Naive thymus-derived CD4-positive, alpha-beta T cell (primary cell): ENCODE measurements at regions of chr14 and their contacts with region 1.

Region 1: DNA sequence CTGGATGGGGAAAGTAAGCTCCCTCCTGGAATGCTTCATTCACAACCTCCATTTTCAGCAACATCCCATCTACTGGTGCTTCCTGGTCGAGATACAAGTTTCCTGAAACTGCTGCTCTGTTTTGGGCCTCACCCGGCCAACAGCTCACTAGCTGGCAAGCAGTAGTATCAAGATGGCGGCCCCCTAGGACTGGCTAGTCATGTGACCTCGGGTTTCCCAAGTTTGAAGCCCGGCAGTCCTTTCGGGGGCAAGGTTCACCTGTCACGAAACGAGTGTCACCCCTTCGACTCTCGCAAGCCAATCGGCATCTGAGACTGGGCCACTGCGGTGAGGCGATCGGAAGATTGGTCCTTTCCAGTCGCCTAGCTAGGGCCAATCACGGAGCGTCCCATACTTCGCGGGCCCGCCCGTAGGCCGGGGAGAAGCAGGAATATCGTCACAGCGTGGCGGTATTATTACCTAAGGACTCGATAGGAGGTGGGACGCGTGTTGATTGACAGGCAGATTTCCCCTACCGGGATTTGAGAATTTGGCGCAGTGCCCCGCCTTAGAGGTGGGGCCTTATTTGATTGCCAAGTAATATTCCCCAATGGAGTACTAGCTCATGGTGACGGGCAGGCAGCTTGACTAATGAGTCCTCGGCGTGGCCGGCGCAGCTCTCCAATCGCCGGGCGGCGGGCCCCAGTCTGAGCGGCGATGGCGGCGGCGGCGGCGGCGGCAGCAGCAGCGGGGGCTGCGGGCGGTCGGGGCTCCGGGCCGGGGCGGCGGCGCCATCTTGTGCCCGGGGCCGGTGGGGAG is at the start of gene PABPN1:
- DNase-seq: peak; percentile 87 to 100 (median 99)
- ATAC-seq: peak; percentile 91
- H3K4me3 ChIP-seq: peak within 1 kb of the TSS; percentile 84
- H3K4me3 Mint-ChIP-seq: peak within 1 kb of the TSS; percentile 91 to 97 (median 93)
- H3K27ac ChIP-seq: peak within 1 kb of the TSS; percentile 96
- H3K27ac Mint-ChIP-seq: peak within 1 kb of the TSS; percentile 96 to 99 (median 98)
- H3K4me1 ChIP-seq: peaks cover 22% of the 10 kb centered on the region in 2 donors
- H3K4me1 Mint-ChIP-seq: peaks cover 22 to 38% (median 32%) of the 10 kb centered on the region in 7 donors
- H3K27me3 ChIP-seq: no peaks in the 10 kb centered on the region
- H3K27me3 Mint-ChIP-seq: peaks cover 0 to 3% (median 0%) of the 10 kb centered on the region in 5 donors
- total RNA-seq, gene PABPN1: 176 to 213 (median 196) TPM

Region 2: GRCh38 chr14:22918804-22919600 is 402.0 kb before region 1 on chr14 and contains the start of gene RBM23:
- CTCF ChIA-PET with region 1: no interaction called
- POLR2A ChIA-PET with region 1: interaction called, 4 read pairs
- intact Hi-C with region 1: loop called (anchors 1 kb)
- DNase-seq: peak; percentile 98 to 100 (median 100)
- ATAC-seq: peak; percentile 92
- H3K4me3 ChIP-seq: peak within 1 kb of the TSS; percentile 96
- H3K4me3 Mint-ChIP-seq: peak within 1 kb of the TSS; percentile 93 to 100 (median 97)
- H3K27ac ChIP-seq: peak within 1 kb of the TSS; percentile 98
- H3K27ac Mint-ChIP-seq: peak within 1 kb of the TSS; percentile 100
- H3K4me1 ChIP-seq: peaks cover 0 to 19% of the 10 kb centered on the region in 2 donors
- H3K4me1 Mint-ChIP-seq: peaks cover 18 to 56% (median 49%) of the 10 kb centered on the region in 7 donors
- H3K27me3 ChIP-seq: no peaks in the 10 kb centered on the region
- H3K27me3 Mint-ChIP-seq: peaks cover 0 to 4% (median 0%) of the 10 kb centered on the region in 5 donors
- total RNA-seq, gene RBM23: 91.9 to 140 (median 99.1) TPM

Region 3: DNA sequence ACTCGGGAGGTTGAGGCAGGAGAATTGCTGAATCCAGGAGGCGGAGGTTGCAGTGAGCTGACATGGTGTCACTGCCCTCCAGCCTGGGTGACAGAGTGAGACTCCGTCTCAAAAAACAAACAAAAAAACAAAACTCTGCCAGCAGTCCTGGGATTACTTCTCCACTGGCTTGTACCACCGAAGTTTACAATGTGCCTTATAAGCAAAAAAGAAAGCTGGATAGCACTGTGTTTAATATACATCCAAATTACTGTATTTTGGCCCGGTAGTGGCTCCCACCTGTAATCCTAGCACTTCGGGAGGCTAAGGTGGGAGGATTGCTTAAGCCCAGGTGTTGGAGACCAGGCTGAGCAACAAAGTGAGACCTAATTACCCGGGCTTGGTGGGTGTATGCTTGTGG is 51.8 kb before region 1 on chr14:
- CTCF ChIA-PET with region 1: no interaction called
- POLR2A ChIA-PET with region 1: interaction called, 6 read pairs
- intact Hi-C with region 1: loop called (anchors 1 to 2 kb)
- DNase-seq: no peak
- ATAC-seq: no peak
- H3K4me3 ChIP-seq: no peak overlapping the region
- H3K4me3 Mint-ChIP-seq: no peak overlapping the region
- H3K27ac ChIP-seq: no peak overlapping the region
- H3K27ac Mint-ChIP-seq: no peak overlapping the region
- H3K4me1 ChIP-seq: no peaks in the 10 kb centered on the region
- H3K4me1 Mint-ChIP-seq: no peaks in the 10 kb centered on the region
- H3K27me3 ChIP-seq: peaks cover 0 to 4% of the 10 kb centered on the region in 2 donors
- H3K27me3 Mint-ChIP-seq: peaks cover 0 to 18% (median 12%) of the 10 kb centered on the region in 5 donors

Region 4: DNA sequence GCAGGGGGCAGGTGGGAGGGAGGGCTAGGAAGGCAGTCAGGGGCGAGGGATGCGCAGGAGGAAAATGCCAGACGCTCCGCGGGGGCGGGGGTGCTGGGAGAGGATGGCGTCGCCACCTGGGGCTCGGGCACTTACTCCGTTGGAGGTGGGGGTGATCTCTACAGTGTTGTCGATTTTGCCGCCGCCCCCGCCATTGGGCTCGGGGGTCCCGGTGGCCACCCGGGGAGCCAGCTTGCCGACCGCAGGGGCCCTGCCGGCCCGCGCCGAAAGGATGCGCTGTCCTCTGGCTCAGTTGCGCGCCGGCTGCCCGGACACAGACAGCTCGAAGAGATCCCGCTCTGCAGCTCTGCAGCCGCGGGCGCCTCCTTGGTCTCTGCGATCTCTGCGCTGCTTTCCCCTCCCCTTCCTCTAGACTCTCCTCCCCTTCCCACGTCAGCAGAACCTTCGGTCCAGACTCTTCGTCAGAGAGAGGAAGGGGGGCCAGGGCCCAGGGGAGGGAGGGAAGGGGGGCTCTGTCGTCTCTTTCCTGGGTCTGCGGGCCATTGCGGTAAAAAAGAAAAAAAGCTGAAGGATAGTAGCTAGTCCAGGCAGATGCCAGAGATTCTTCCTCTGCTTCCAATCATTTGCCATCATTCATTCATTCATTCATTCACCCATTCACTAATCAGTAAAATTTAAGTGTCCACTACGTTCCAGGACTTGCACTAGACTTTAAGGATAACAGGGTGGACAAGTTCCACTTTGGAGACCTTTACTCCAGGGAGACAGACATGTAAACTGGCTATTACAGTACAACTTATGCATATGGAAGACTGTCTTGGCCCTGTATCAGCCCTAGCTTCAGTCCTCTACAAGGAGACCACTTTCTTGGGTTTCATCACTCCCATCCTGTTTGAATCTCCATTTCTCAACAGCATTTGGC is 31.8 kb after region 1 on chr14 and contains the start of gene SLC22A17:
- CTCF ChIA-PET with region 1: interaction called, 3 read pairs
- POLR2A ChIA-PET with region 1: interaction called, 26 read pairs
- intact Hi-C with region 1: loop called in 1 of 2 experiments (anchors 1 kb)
- DNase-seq: peak; percentile 42 to 80 (median 67)
- ATAC-seq: peak; percentile 93
- H3K4me3 ChIP-seq: peak within 1 kb of the TSS; percentile 54
- H3K4me3 Mint-ChIP-seq: peak within 1 kb of the TSS; percentile 78 to 92 (median 88)
- H3K27ac ChIP-seq: peak within 1 kb of the TSS; percentile 58
- H3K27ac Mint-ChIP-seq: peak within 1 kb of the TSS in 8 of 9 donors; percentile 5 to 93 (median 77)
- H3K4me1 ChIP-seq: no peaks in the 10 kb centered on the region
- H3K4me1 Mint-ChIP-seq: peaks cover 10 to 25% (median 18%) of the 10 kb centered on the region in 7 donors
- H3K27me3 ChIP-seq: no peaks in the 10 kb centered on the region
- H3K27me3 Mint-ChIP-seq: peaks cover 0 to 55% (median 33%) of the 10 kb centered on the region in 5 donors
- total RNA-seq, gene SLC22A17: 1.9 to 30.0 (median 22.6) TPM

Region 5: DNA sequence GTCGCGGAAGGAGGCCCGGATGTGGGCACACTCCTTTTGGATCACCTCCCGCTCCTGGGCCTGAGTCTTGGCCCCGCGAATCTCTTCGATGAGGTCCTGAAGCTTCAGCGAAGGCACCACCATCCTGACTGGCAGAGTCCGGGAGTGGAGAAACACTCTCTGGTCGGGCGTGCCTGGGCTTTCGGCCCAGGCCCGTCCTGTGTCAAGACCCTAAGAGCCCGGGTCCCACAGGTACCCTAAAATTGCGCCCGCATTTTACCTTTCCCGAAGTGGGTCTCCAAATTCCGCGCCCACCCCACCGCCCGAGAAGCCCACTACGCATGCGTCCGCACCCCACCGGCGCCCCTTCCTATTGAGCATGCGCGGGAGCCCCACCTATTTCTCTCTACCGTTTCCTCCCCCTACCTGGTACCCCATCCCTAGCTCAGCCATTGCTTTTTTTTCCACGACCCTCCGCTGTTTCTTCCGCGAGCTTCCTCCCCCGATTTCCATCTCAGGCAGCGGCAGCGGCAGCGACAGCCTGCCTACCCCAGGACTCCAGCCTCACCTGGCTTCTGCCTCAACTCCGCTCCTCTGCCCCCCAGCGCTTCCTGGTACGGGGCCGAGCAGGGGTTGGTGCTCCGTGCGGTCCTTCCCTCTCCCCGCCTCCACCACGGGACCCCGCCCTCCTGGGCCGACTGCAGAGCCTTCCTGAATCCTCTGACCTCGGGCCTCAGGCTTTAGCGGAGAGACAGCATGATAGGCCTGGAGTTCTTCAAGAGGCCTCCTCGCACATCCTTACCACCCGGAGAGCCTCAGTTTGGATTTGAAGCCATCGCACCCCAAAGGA is 246.4 kb after region 1 on chr14 and contains the start of gene AP1G2:
- CTCF ChIA-PET with region 1: no interaction called
- POLR2A ChIA-PET with region 1: no interaction called
- intact Hi-C with region 1: loop called in 1 of 2 experiments (anchors 1 kb)
- DNase-seq: peak; percentile 67 to 87 (median 83)
- ATAC-seq: peak; percentile 93
- H3K4me3 ChIP-seq: peak within 1 kb of the TSS; percentile 98
- H3K4me3 Mint-ChIP-seq: peak within 1 kb of the TSS; percentile 98 to 100 (median 99)
- H3K27ac ChIP-seq: peak within 1 kb of the TSS; percentile 81
- H3K27ac Mint-ChIP-seq: peak within 1 kb of the TSS; percentile 96 to 99 (median 98)
- H3K4me1 ChIP-seq: peaks cover 14 to 16% of the 10 kb centered on the region in 2 donors
- H3K4me1 Mint-ChIP-seq: peaks cover 19 to 48% (median 43%) of the 10 kb centered on the region in 7 donors
- H3K27me3 ChIP-seq: no peaks in the 10 kb centered on the region
- H3K27me3 Mint-ChIP-seq: peaks cover 0 to 11% (median 0%) of the 10 kb centered on the region in 5 donors
- total RNA-seq, gene AP1G2: 266 to 548 (median 293) TPM

Region 6: DNA sequence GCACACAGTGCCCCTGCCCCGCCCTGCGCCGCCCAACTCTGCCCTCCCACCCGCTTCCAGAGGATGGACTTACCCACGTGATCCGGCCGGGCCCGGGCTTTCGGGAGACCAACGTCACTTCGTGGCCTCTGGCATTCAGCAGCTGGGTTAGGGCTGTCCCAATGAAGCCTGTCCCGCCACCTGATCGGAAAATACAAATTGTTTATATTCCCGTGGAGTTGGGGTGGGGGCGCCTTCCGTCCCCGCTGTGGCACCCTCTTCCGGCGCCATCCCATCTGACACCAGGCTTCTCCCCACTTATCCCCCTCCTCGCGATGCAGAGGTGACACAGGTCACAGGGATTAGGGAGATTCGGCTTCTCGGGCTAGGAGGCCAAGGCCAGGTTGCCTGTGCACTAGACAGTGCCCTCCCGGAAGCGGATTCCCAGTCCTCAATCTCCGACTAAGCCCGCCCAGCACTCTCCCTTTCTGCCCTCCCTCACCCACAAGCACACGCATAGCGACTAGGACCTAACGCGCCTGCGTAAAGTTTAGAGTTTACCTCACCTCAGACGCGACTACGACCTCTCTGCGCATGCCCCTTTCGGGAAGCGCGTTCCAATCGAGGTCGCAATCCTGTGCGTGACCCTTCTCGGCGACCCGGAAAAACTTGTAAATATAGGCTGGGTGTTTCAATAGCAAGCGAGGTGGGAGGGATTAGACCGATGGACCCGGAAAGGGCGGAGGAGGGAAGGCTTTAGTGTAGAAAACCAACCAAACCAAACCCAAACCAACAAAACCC is 1121.5 kb after region 1 on chr14 and contains the start of gene SDR39U1:
- CTCF ChIA-PET with region 1: no interaction called
- POLR2A ChIA-PET with region 1: no interaction called
- intact Hi-C with region 1: loop called in 1 of 2 experiments (anchors 2 kb)
- DNase-seq: peak; percentile 81 to 99 (median 98)
- ATAC-seq: peak; percentile 93
- H3K4me3 ChIP-seq: peak within 1 kb of the TSS; percentile 85
- H3K4me3 Mint-ChIP-seq: peak within 1 kb of the TSS; percentile 91 to 98 (median 95)
- H3K27ac ChIP-seq: peak within 1 kb of the TSS; percentile 98
- H3K27ac Mint-ChIP-seq: peak within 1 kb of the TSS; percentile 92 to 99 (median 98)
- H3K4me1 ChIP-seq: peaks cover 20 to 32% of the 10 kb centered on the region in 2 donors
- H3K4me1 Mint-ChIP-seq: peaks cover 27 to 57% (median 49%) of the 10 kb centered on the region in 7 donors
- H3K27me3 ChIP-seq: no peaks in the 10 kb centered on the region
- H3K27me3 Mint-ChIP-seq: peaks cover 0 to 3% (median 0%) of the 10 kb centered on the region in 5 donors
- total RNA-seq, gene SDR39U1: 64.7 to 137 (median 96.2) TPM